PC-3 (cell line): ENCODE measurements at regions of chr18 and their contacts with region 1.

Region 1: GRCh38 chr18:49561289-49562193 is at the start of gene LIPG:
- DNase-seq: peak; percentile 76
- ATAC-seq: peak; percentile 74
- H3K4me3 ChIP-seq: peak within 1 kb of the TSS; percentile 71
- H3K27ac ChIP-seq: peak within 1 kb of the TSS; percentile 76
- H3K4me1 ChIP-seq: peaks cover 6% of the 10 kb centered on the region
- H3K27me3 ChIP-seq: no peaks in the 10 kb centered on the region
- CTCF ChIP-seq: no peak
- total RNA-seq, gene LIPG: 9.1 and 14.8 TPM in 2 replicates

Region 2: DNA sequence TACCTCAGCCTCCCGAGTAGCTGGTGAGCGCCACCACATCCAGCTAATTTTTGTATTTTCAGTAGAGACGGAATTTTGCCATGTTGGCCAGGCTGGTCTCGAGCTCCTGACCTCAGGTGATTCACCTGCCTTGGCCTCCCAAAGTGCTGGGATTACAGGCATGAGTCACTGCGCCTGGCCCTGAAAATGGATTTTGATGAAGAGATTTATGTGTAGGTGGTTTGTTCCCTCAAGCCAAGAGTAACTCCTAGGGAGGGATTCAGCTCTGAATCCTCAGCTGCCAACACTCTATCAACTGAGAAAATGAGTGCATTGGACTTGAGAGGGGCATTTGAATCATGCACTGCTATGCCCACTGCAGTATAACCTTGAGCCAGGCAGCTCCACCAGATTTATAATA is 17.2 kb before region 1 on chr18:
- CTCF ChIA-PET with region 1: no interaction called
- POLR2A ChIA-PET with region 1: no interaction called
- intact Hi-C with region 1: no loop called
- DNase-seq: no peak
- ATAC-seq: no peak
- H3K4me3 ChIP-seq: no peak overlapping the region
- H3K27ac ChIP-seq: no peak overlapping the region
- H3K4me1 ChIP-seq: peaks cover 8% of the 10 kb centered on the region
- H3K27me3 ChIP-seq: no peaks in the 10 kb centered on the region
- CTCF ChIP-seq: no peak

Region 3: GRCh38 chr18:49612515-49613033 is 51.0 kb after region 1 on chr18:
- CTCF ChIA-PET with region 1: no interaction called
- POLR2A ChIA-PET with region 1: no interaction called
- intact Hi-C with region 1: loop called (anchors 5 kb)
- DNase-seq: no peak
- ATAC-seq: no peak
- H3K4me3 ChIP-seq: no peak overlapping the region
- H3K27ac ChIP-seq: no peak overlapping the region
- H3K4me1 ChIP-seq: peaks cover 15% of the 10 kb centered on the region
- H3K27me3 ChIP-seq: no peaks in the 10 kb centered on the region
- CTCF ChIP-seq: no peak

Region 4: GRCh38 chr18:49690307-49690706 is 128.8 kb after region 1 on chr18:
- CTCF ChIA-PET with region 1: no interaction called
- POLR2A ChIA-PET with region 1: no interaction called
- intact Hi-C with region 1: loop called (anchors 10 kb)
- DNase-seq: peak; percentile 78
- ATAC-seq: peak; percentile 74
- H3K4me3 ChIP-seq: peak overlapping the region; percentile 46; the same call in 1 of the 2 replicates
- H3K27ac ChIP-seq: peak overlapping the region; percentile 100
- H3K4me1 ChIP-seq: peaks cover 30% of the 10 kb centered on the region
- H3K27me3 ChIP-seq: no peaks in the 10 kb centered on the region
- CTCF ChIP-seq: no peak

Region 5: GRCh38 chr18:49728542-49728941 is 167.0 kb after region 1 on chr18:
- CTCF ChIA-PET with region 1: interaction called, 4 read pairs
- POLR2A ChIA-PET with region 1: no interaction called
- intact Hi-C with region 1: loop called (anchors 2 kb)
- DNase-seq: peak; percentile 41
- ATAC-seq: no peak
- H3K4me3 ChIP-seq: no peak overlapping the region
- H3K27ac ChIP-seq: no peak overlapping the region
- H3K4me1 ChIP-seq: peaks cover 16% of the 10 kb centered on the region
- H3K27me3 ChIP-seq: no peaks in the 10 kb centered on the region
- CTCF ChIP-seq: peak; percentile 54

Region 6: DNA sequence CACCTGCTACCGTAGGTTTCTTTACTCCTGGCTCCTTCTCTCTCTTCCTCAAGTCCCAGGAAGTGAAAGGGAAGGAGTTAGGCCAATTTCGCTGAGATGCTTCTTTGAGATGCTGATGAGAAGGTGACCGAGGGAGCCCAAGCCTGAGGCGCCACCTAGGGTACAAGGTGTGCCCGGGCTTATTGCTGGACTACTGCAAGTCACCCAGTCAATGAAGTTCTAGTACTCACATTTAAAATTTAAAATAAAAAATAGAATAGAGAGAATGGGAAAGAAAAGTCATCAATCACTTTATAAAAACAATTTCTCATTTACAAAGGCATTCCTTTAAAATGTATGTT is 206.5 kb after region 1 on chr18:
- CTCF ChIA-PET with region 1: no interaction called
- POLR2A ChIA-PET with region 1: no interaction called
- intact Hi-C with region 1: loop called (anchors 1 kb)
- DNase-seq: peak; percentile 52
- ATAC-seq: peak; percentile 71
- H3K4me3 ChIP-seq: no peak overlapping the region
- H3K27ac ChIP-seq: no peak overlapping the region
- H3K4me1 ChIP-seq: no peaks in the 10 kb centered on the region
- H3K27me3 ChIP-seq: no peaks in the 10 kb centered on the region
- CTCF ChIP-seq: peak; percentile 61

Region 7: GRCh38 chr18:49858309-49859020 is 296.9 kb after region 1 on chr18:
- CTCF ChIA-PET with region 1: interaction called, 5 read pairs
- POLR2A ChIA-PET with region 1: no interaction called
- intact Hi-C with region 1: loop called (anchors 1 kb)
- DNase-seq: peak; percentile 61
- ATAC-seq: peak; percentile 80
- H3K4me3 ChIP-seq: no peak overlapping the region
- H3K27ac ChIP-seq: peak overlapping the region; percentile 23; the same call in 1 of the 2 replicates
- H3K4me1 ChIP-seq: peaks cover 7% of the 10 kb centered on the region; the same call in 1 of the 2 replicates
- H3K27me3 ChIP-seq: no peaks in the 10 kb centered on the region
- CTCF ChIP-seq: peak; percentile 77